Activated CD8-positive, alpha-beta T cell treated with anti-CD3 and anti-CD28 coated beads, Interleukin-2, amount 10 ng/mL, durations not matched to agents 7 days and 5 days (primary cell): ENCODE measurements at regions of chr5 and their contacts with region 1.

Region 1: DNA sequence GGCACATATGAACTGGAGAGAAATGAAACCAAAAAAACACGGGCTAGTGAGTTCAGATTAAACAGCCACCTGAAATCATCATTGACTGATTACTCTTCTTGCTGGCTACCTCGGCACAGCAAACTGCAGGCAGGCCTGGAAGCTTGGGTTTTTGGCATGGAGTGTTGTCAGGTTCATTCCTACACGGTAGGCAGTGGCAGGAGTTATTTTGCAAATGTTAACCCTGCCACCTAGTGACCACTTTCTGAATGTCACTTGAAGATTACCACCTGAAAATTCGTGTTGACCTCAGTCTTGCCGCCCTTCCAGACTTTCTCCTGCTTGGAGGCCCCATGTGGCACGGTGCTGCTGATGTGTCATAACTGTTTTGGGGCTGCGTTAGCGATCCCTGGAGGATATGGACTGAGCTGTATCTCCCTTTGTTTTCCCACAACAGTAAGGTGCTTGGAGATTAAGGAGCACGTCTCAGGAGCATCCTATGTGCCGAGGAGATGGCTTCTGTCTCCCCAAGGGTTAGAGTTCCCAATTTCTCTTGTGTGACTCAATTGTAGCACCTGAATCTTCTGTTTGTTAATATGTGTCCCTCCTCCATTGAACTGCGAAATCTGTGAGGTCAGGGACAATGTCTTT is 12.7 kb upstream of the CD180 start:
- DNase-seq: peak; percentile 82
- ATAC-seq: peak; percentile 43
- H3K4me3 Mint-ChIP-seq: no peak overlapping the region
- H3K27ac Mint-ChIP-seq: peak overlapping the region; percentile 62
- H3K4me1 Mint-ChIP-seq: peaks cover 71% of the 10 kb centered on the region
- H3K27me3 Mint-ChIP-seq: no peaks in the 10 kb centered on the region

Region 2: DNA sequence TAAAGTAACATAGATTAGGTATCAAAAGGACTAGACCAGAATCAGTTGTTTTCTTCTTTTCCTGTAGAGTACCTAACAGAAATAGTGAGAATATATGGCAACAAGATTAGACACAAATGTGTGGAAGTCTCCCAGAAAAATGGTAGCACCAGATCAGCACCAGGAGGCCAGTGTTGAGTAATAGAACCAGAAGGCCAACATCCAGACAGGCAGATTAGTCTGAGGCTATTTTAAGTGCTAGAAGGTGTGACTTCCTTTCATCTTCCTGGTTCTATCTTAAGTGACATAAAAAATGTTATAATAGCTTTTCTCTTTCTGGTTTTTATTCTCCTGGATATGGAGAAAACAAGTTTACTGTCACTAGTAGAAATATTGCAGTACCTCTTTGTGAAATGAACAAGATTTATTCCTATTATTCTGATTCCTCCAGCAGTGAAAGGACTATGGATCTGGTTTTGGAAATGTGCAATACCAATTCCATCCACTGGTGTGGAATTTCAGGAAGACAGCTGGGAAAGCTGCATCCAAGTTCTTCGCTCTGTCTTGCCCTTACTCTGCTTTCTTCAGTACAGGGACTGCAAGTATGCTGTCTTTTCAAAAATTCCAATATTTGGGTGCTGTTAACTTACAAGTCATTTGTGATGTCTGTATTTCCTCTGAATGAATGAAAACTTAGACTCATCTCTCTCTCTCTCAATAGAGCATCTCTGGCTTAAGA is 1545.3 kb before region 1 on chr5:
- CTCF ChIA-PET with region 1: no interaction called
- POLR2A ChIA-PET with region 1: no interaction called
- DNase-seq: no peak
- ATAC-seq: no peak
- H3K4me3 Mint-ChIP-seq: no peak overlapping the region
- H3K27ac Mint-ChIP-seq: no peak overlapping the region
- H3K4me1 Mint-ChIP-seq: peaks cover 2% of the 10 kb centered on the region
- H3K27me3 Mint-ChIP-seq: no peaks in the 10 kb centered on the region

Region 3: DNA sequence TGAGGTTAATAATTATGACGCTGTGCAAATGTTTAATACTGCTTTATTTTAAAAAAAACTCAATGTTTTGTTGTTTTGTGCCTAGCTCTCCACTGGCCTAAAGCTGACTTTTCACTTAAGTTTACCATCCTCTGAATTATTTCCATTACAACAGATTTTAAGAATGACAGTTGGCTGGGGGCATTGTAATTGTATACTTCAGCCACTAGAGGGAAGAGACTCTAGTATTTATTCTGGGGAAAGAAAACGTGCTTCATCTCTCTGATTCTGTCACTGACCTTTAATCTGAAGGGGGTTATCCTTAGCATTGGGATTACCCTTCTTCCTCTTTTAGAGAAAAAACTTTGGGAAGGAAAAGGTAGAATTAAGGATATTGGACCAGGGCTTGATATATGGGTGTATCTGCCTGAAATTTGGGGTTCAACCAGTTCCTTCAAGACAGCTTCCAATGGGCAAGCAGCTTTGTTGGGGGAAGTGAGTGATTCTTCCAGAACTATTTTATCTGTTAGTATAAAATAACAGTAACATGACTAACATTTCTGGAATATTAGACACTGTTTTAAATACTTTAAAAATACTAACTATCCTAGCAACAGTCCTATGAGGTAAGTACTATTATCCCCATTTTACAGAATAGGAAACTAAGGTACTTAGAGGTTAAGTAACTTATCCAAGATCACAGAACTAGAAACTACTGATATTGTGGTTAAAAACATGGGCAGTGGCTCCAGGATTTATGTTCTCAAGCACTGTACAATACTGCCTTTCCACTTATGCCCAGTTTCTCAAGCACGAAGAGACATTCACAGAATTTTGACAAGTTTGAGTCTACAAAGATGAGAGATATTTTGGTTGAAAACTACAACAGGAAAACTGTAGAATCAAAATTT is 221.1 kb before region 1 on chr5:
- CTCF ChIA-PET with region 1: interaction called, 16 read pairs
- POLR2A ChIA-PET with region 1: no interaction called
- DNase-seq: no peak
- ATAC-seq: no peak
- H3K4me3 Mint-ChIP-seq: no peak overlapping the region
- H3K27ac Mint-ChIP-seq: no peak overlapping the region
- H3K4me1 Mint-ChIP-seq: peaks cover 5% of the 10 kb centered on the region
- H3K27me3 Mint-ChIP-seq: peaks cover 16% of the 10 kb centered on the region

Region 4: DNA sequence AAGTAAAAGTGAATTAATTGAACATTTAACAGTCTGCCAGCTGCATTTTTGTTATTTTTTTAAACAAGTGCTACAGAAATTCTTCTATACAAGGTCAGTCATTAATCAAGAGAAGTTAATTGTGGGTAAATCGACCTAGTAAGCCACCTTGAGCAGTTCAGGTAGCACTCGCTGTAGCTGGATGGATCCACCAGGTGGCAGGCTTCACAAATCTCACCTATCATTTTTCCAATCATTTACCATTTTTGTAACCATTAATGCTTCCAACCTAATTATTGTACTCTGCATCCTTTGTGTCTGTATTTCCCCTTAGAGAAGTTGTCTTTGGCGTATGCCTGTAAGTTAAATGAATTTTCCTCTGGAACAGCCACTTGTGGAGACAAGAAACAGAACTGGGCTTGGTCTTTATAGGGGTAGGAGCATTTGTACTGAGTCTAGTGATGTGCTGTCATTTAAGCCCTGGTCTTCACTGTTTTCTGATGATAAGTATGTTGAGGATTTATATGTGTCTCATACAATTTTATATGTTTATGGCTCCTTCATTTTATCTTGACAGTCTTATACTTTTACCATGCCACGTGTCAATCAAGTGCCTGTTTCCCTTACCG is 52.2 kb before region 1 on chr5:
- CTCF ChIA-PET with region 1: interaction called, 441 read pairs
- POLR2A ChIA-PET with region 1: interaction called, 10 read pairs
- DNase-seq: peak; percentile 63
- ATAC-seq: peak; percentile 70
- H3K4me3 Mint-ChIP-seq: no peak overlapping the region
- H3K27ac Mint-ChIP-seq: peak overlapping the region; percentile 48
- H3K4me1 Mint-ChIP-seq: peaks cover 52% of the 10 kb centered on the region
- H3K27me3 Mint-ChIP-seq: no peaks in the 10 kb centered on the region

Region 5: DNA sequence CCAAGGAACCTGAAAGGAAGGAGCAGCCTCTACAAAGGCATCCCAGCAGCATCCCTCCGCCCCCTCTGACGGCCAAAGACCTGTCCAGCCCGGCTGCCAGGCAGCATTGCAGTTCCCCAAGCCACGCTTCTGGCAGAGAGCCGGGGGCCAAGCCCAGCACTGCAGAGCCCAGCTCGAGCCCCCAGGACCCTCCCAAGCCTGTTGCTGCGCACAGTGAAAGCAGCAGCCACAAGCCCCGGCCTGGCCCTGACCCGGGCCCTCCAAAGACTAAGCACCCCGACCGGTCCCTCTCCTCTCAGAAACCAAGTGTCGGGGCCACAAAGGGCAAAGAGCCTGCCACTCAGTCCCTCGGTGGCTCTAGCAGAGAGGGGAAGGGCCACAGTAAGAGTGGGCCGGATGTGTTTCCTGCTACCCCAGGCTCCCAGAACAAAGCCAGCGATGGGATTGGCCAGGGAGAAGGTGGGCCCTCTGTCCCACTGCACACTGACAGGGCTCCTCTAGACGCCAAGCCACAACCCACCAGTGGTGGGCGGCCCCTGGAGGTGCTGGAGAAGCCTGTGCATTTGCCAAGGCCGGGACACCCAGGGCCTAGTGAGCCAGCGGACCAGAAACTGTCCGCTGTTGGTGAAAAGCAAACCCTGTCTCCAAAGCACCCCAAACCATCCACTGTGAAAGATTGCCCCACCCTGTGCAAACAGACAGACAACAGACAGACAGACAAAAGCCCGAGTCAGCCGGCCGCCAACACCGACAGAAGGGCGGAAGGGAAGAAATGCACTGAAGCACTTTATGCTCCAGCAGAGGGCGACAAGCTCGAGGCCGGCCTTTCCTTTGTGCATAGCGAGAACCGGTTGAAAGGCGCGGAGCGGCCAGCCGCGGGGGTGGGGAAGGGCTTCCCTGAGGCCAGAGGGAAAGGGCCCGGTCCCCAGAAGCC is 43.5 kb before region 1 on chr5:
- CTCF ChIA-PET with region 1: interaction called, 441 read pairs
- POLR2A ChIA-PET with region 1: interaction called, 177 read pairs
- DNase-seq: peak; percentile 94
- ATAC-seq: peak; percentile 88
- H3K4me3 Mint-ChIP-seq: peak overlapping the region; percentile 90
- H3K27ac Mint-ChIP-seq: peak overlapping the region; percentile 99
- H3K4me1 Mint-ChIP-seq: peaks cover 67% of the 10 kb centered on the region
- H3K27me3 Mint-ChIP-seq: no peaks in the 10 kb centered on the region

Region 6: DNA sequence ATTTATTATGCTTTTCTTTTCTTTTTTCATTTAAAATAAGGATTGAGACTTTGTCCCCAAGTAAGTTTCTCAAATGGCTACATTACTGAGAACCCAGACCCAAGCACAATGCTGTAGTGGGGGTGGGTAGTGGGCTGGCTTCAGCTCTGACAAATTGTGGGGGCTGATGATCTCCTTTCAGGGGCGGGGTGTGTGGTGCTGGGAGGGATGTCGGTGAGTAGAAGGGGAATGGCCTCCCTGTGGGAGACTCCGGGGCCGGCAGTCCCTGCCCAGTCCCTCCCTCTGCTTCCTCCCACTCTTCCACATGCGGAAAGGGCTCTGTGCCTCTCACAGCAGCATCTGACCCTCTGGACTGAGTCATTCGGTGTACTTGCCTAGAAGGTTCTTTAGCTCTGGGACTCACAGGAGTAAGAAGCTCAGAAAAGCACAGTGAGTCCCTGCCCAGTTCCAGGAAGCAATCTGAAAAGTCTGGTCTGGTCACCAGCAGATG is 26.9 kb before region 1 on chr5:
- CTCF ChIA-PET with region 1: interaction called, 28 read pairs
- POLR2A ChIA-PET with region 1: interaction called, 5 read pairs
- DNase-seq: no peak
- ATAC-seq: peak; percentile 21
- H3K4me3 Mint-ChIP-seq: peak overlapping the region; percentile 49
- H3K27ac Mint-ChIP-seq: peak overlapping the region; percentile 85
- H3K4me1 Mint-ChIP-seq: peaks cover 70% of the 10 kb centered on the region
- H3K27me3 Mint-ChIP-seq: no peaks in the 10 kb centered on the region

Region 7: GRCh38 chr5:67221487-67222242 is 12.4 kb after region 1 on chr5:
- CTCF ChIA-PET with region 1: interaction called, 31 read pairs
- POLR2A ChIA-PET with region 1: interaction called, 6 read pairs
- DNase-seq: peak; percentile 83
- ATAC-seq: peak; percentile 92
- H3K4me3 Mint-ChIP-seq: peak overlapping the region; percentile 61
- H3K27ac Mint-ChIP-seq: peak overlapping the region; percentile 96
- H3K4me1 Mint-ChIP-seq: peaks cover 66% of the 10 kb centered on the region
- H3K27me3 Mint-ChIP-seq: no peaks in the 10 kb centered on the region

Region 8: GRCh38 chr5:67731886-67732285 is 522.6 kb after region 1 on chr5:
- CTCF ChIA-PET with region 1: no interaction called
- POLR2A ChIA-PET with region 1: no interaction called
- DNase-seq: no peak
- ATAC-seq: no peak
- H3K4me3 Mint-ChIP-seq: no peak overlapping the region
- H3K27ac Mint-ChIP-seq: no peak overlapping the region
- H3K4me1 Mint-ChIP-seq: no peaks in the 10 kb centered on the region
- H3K27me3 Mint-ChIP-seq: peaks cover 5% of the 10 kb centered on the region